ENCODE measurements at regions of chr1 and their contacts with region 1.

Region 1: DNA sequence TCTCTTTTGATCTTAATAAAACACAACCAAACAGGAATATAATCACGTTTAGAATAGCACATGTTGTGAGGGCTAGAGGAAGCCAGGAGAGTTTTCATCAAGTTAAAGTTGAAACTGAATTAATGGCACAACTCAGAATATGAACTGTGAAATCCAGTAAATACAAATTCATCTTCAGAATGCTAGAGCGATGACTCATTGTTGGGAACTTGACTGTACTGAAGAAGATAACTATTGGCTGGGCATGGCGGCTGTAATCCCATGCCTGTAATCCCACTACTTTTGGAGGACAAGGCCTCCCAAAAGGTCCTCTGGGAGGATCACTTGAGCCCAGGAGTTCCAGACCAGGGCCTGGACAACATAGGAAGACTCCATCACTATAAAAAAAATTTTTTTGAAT is 8.8 kb downstream of the SYF2 start:
- DNase-seq: no peak
- ATAC-seq: no peak
- H3K4me3 ChIP-seq: no peak overlapping the region
- H3K27ac ChIP-seq: no peak overlapping the region
- H3K4me1 ChIP-seq: peaks cover 0 to 6% (median 0%) of the 10 kb centered on the region in 9 donors
- H3K27me3 ChIP-seq: no peaks in the 10 kb centered on the region
- CTCF ChIP-seq: no peak

Region 2: DNA sequence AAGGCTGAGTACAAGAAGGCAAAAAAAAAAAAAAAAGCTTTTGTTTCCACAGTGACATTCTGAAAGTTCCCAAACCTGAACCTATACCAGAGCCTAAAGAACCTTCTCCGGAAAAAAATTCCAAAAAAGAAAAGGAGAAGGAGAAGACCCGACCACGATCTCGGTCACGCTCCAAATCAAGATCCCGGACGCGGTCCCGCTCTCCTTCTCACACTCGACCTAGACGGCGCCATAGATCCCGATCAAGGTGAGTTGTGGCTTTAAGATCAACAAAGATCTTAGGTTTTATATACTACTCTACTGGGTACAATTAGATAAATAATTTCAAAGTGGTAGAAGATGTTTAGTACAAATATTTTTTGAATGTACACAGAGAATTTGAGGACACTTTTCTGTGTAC is 571.1 kb before region 1 on chr1:
- intact Hi-C with region 1: loop called in 3 of 10 experiments (anchors 5 to 10 kb)
- DNase-seq: no peak
- ATAC-seq: no peak
- H3K4me3 ChIP-seq: no peak overlapping the region
- H3K27ac ChIP-seq: no peak overlapping the region
- H3K4me1 ChIP-seq: no peaks in the 10 kb centered on the region
- H3K27me3 ChIP-seq: no peaks in the 10 kb centered on the region
- CTCF ChIP-seq: no peak

Region 3: DNA sequence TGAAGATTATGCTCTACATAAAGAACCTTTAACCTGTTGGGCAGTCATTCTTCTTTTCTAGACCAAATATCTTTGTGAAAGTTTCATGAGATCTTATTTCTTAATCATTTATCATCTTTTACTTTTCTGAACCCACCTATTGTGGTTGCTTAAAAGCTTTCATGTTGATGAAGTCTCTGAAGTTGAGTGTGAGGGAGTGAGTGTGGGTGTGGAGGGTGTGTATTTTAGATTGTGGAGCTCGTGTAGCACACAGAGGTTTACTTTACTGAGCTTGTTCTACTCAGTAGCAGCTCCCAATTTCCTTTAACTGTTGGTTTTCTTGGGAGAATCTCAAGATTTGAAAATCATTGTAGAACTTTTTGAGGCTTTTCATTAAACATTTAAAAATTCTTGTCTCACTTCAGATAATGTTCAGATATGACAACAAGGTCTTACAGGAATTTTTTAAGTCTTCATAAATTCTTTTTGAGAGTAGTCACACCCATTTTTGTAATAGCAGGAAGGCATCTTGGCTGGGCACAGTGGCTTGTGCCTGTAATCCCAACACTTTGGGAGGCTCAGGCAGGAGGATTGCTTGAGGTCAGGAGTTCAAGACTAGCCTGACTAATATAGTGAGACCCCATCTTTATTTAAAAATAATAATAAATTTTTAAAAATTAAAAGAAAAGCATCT is 563.3 kb before region 1 on chr1:
- intact Hi-C with region 1: loop called in 3 of 10 experiments (anchors 10 kb)
- DNase-seq: no peak
- ATAC-seq: no peak
- H3K4me3 ChIP-seq: no peak overlapping the region
- H3K27ac ChIP-seq: no peak overlapping the region
- H3K4me1 ChIP-seq: peaks cover 0 to 5% (median 0%) of the 10 kb centered on the region in 9 donors
- H3K27me3 ChIP-seq: no peaks in the 10 kb centered on the region
- CTCF ChIP-seq: no peak

Region 4: DNA sequence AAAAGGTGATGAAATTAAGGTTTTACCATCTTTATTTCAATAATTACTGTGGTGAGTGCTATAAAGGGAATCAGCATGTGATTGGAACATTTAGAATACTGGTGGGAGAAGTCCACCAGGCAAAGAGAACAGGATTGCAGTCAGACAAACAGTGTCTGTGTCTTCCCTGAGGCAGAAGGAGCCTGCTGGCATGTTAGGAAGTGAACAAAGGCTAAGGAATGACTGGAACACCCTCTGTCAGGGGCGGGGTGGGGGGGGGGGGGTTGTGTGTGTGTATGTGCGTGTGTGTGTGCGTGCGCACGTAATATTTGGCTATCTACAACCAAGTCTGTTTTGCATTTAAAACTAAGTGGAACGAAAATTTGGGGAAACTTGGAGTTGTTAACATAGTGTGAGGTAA is 550.1 kb before region 1 on chr1:
- intact Hi-C with region 1: loop called in 2 of 10 experiments (anchors 10 kb)
- DNase-seq: no peak
- ATAC-seq: no peak
- H3K4me3 ChIP-seq: no peak overlapping the region
- H3K27ac ChIP-seq: no peak overlapping the region
- H3K4me1 ChIP-seq: no peaks in the 10 kb centered on the region
- H3K27me3 ChIP-seq: no peaks in the 10 kb centered on the region
- CTCF ChIP-seq: no peak

Region 5: DNA sequence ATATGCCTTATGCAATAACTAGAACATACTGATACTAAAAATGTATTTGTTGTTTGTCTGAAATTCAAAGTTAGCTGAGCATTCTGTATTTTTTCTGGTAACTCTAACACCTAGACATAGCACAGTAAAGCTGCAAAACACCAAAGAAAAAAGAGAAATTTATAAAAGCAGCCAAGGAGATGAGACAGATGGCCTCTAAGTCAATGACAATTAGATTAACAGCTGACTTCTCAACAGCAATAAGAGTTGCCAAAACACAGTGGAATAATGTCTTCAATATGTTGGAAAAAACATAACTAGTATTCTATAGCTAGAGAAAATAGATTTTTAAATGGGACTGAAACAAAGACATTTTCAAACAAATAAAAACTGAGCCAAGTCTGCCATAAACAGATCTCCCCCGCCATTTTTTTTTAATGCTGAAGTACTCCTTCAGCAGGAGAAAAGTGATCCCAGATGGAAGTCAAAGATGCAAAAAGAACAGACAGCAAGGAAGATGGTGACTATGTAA is 72.4 kb before region 1 on chr1:
- intact Hi-C with region 1: no loop called
- DNase-seq: no peak
- ATAC-seq: no peak
- H3K4me3 ChIP-seq: no peak overlapping the region
- H3K27ac ChIP-seq: no peak overlapping the region
- H3K4me1 ChIP-seq: no peaks in the 10 kb centered on the region
- H3K27me3 ChIP-seq: peaks cover 0 to 59% (median 35%) of the 10 kb centered on the region in 7 donors
- CTCF ChIP-seq: no peak

Region 6: GRCh38 chr1:25253911-25254310 is 30.4 kb after region 1 on chr1:
- intact Hi-C with region 1: no loop called
- DNase-seq: no peak
- ATAC-seq: no peak
- H3K4me3 ChIP-seq: no peak overlapping the region
- H3K27ac ChIP-seq: no peak overlapping the region
- H3K4me1 ChIP-seq: peaks cover 0 to 9% (median 0%) of the 10 kb centered on the region in 9 donors
- H3K27me3 ChIP-seq: no peaks in the 10 kb centered on the region
- CTCF ChIP-seq: no peak

Measured in heart right ventricle (tissue), 16 donors.